Sigmoid colon (tissue), 7 donors: ENCODE measurements at regions of chr15 and their contacts with region 1.

Region 1: GRCh38 chr15:78195735-78196201 is 38.6 kb downstream of the ACSBG1 start:
- DNase-seq: no peak
- H3K4me3 ChIP-seq: no peak overlapping the region
- H3K27ac ChIP-seq: no peak overlapping the region
- H3K4me1 ChIP-seq: no peaks in the 10 kb centered on the region
- H3K27me3 ChIP-seq: no peaks in the 10 kb centered on the region
- CTCF ChIP-seq: peak in 3 of 4 experiments; percentile 32 to 56 (median 54)
- EP300 ChIP-seq: no peak
- POLR2A ChIP-seq: no peak

Region 2: DNA sequence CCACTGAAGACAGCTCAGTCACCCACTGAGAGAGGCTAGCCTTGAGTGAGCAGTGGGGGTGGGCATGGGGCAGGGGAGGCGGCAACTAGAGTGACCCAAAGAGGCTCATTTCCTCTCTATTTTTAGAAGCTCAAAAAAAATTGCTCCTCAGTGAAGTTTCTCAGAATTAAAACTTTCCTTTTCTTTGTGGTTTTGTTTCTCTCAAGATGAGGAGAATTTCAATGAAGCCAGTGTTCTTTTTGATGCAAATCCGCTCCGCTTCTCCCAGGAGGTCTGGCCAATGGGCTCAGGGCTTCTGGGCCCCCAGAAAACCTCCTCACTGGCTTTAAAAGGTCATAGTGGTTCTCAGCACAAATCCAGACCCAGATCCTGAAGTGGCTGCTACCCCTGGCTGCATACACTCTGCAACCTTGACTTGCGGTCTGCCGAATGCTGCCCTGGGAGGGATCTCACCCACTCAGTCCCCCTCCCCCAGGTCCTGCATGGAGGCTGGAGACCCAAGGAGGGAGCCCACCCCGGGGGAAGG is 38.8 kb after region 1 on chr15 and contains the start of gene ACSBG1:
- intact Hi-C with region 1: loop called (anchors 5 kb)
- DNase-seq: peak; percentile 47
- H3K4me3 ChIP-seq: peak within 1 kb of the TSS in 1 of 4 donors; percentile 7
- H3K27ac ChIP-seq: no peak within 1 kb of the TSS
- H3K4me1 ChIP-seq: no peaks in the 10 kb centered on the region
- H3K27me3 ChIP-seq: no peaks in the 10 kb centered on the region
- CTCF ChIP-seq: no peak
- EP300 ChIP-seq: no peak
- POLR2A ChIP-seq: no peak
- total RNA-seq, gene ACSBG1: 1.3 to 3.9 (median 2.2) TPM